ENCODE measurements at regions of chr19 and their contacts with region 1.

Region 1: DNA sequence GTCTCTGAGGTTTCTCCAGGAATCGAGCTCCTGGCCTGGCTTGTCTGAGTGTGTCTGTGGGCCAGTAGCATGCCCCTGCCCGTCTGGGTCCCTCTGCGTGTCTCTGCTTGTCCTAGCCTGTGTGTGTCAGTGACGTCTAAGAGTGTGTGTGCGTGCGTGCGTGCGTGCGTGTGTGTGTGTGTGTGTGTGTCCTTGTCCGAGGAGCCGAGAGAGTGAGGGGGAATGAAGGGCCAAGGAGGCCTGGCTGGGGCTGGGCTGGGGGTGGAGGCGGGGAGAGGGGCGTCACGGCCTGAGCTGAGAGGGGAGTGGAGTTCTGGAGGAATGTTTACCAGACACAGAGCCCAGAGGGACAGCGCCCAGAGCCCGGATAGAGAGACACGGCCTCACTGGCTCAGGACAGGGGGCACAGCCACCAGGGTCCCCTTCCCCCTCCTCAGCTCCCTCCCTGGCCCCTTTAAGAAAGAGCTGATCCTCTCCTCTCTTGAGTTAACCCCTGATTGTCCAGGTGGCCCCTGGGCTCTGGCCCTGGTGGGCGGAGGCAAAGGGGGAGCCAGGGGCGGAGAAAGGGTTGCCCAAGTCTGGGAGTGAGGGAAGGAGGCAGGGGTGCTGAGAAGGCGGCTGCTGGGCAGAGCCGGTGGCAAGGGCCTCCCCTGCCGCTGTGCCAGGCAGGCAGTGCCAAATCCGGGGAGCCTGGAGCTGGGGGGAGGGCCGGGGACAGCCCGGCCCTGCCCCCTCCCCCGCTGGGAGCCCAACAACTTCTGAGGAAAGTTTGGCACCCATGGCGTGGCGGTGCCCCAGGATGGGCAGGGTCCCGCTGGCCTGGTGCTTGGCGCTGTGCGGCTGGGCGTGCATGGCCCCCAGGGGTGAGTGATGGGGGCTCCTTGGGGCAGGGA is at the start of gene AXL:
- DNase-seq: peak; percentile 90 to 97
- ATAC-seq: peak; percentile 75 to 80
- H3K4me3 ChIP-seq: peak within 1 kb of the TSS; percentile 61
- H3K27ac ChIP-seq: peak within 1 kb of the TSS; percentile 85 to 91
- H3K4me1 ChIP-seq: peaks cover 53% of the 10 kb centered on the region
- CTCF ChIP-seq: no peak
- EP300 ChIP-seq: peak in 1 of 2 experiments; percentile 20; a peak in 1 of 5 replicates
- POLR2A ChIP-seq: peak; percentile 59
- RAD21 ChIP-seq: no peak; a peak in 1 of 5 replicates
- polyA plus RNA-seq, gene AXL: 60.1 and 60.3 TPM in 2 replicates

Region 2: DNA sequence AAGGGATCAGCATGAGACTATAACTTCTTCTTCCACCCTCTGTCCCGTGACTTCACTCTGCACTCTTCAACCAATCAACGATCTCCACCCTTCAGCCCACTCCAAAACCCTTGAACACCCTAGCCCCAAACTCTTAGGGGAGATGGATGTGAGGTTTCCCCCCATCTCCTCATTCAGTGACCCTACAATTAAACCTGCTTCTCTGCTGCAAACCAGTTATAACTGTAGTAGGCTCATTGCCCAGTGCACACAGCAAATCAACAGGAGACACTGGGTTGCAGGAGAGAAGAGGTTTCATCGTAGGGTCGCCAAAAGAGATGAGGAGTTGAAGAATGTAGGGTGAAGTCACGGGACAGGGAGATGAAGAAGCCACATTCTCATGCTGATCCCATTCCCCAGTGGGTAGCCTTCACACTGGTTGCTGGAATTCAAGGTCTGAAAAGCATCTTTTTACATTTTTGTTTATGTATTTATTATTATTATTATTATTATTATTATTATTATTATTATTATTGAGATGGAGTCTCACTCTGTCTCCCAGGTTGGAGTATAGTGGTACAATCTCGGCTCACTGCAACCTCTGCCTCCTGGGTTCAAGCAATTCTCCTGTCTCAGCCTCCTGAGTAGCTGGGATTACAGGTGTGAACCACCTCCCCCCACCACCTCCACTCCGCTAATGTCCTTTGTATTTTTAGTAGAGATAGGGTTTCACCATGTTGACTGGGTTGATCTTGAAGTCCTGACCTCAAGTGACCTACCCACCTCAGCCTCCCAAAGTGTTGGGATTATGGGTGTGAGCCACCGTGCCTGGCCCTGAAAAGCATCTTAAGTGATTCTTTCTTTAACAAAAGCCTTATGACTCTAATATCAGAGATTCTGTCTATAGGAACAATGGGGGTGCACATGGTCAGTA is 31.6 kb before region 1 on chr19:
- CTCF ChIA-PET with region 1: no interaction called
- POLR2A ChIA-PET with region 1: no interaction called
- DNase-seq: no peak
- ATAC-seq: no peak
- H3K4me3 ChIP-seq: no peak overlapping the region
- H3K27ac ChIP-seq: no peak overlapping the region
- H3K4me1 ChIP-seq: peaks cover 38% of the 10 kb centered on the region
- CTCF ChIP-seq: no peak
- EP300 ChIP-seq: no peak
- POLR2A ChIP-seq: no peak
- RAD21 ChIP-seq: no peak

Region 3: GRCh38 chr19:41233748-41234240 is 14.9 kb after region 1 on chr19:
- CTCF ChIA-PET with region 1: interaction called, 295 read pairs
- POLR2A ChIA-PET with region 1: interaction called, 3 read pairs
- DNase-seq: no peak
- ATAC-seq: no peak
- H3K4me3 ChIP-seq: no peak overlapping the region
- H3K27ac ChIP-seq: peak overlapping the region in 1 of 2 experiments; percentile 5; a peak in 1 of 6 replicates
- H3K4me1 ChIP-seq: peaks cover 6% of the 10 kb centered on the region; the same call in 2 of the 3 replicates
- CTCF ChIP-seq: no peak
- EP300 ChIP-seq: no peak
- POLR2A ChIP-seq: no peak
- RAD21 ChIP-seq: no peak

Region 4: GRCh38 chr19:41248895-41249294 is 30.0 kb after region 1 on chr19:
- CTCF ChIA-PET with region 1: interaction called, 1,023 read pairs
- POLR2A ChIA-PET with region 1: no interaction called
- DNase-seq: no peak
- ATAC-seq: peak; percentile 67 to 68; a peak in 5 of 6 replicates
- H3K4me3 ChIP-seq: no peak overlapping the region
- H3K27ac ChIP-seq: no peak overlapping the region
- H3K4me1 ChIP-seq: no peaks in the 10 kb centered on the region
- CTCF ChIP-seq: no peak
- EP300 ChIP-seq: no peak
- POLR2A ChIP-seq: no peak
- RAD21 ChIP-seq: no peak